ENCODE measurements at regions of chr11 and their contacts with region 1.

Region 1: GRCh38 chr11:28058333-28058732 is 49.6 kb downstream of the KIF18A start:
- DNase-seq: peak; percentile 11
- H3K4me3 ChIP-seq: no peak overlapping the region
- H3K27ac ChIP-seq: no peak overlapping the region
- H3K27me3 ChIP-seq: no peaks in the 10 kb centered on the region
- CTCF ChIP-seq: no peak

Region 2: DNA sequence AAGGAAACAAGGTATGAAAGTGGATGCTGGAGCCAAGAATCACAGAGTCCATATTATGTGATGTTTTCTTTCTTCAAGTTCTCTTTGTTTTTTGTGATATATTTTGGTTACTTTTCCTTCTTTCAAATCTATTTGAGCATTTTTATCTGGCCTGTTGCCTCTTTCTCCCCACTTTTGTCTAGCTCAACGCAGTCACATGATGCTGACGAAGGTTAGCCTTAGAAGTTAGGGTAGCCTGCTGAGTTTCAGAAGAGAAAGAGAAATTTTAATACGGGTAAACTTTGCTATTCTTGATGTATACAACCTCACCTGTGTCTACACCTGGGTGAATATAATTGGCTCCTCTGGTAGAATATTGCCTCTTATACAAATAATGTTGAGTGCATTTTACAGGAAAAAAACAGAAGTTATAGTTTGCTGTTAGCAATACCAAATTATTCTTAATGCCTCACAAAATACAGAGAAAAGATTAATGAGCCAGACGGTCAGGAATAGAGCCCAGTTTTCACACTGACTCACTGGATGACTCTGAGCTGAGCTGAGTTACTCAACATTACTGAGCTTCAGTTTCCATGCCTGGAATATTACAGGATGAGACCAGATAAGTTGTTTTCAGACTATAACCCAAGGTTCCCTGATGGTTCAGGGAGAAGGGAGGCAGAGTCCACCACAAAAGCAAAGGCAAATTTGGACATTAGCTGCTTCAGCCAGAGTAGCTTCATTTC is 196.5 kb before region 1 on chr11:
- CTCF ChIA-PET with region 1: interaction called, 15 read pairs
- POLR2A ChIA-PET with region 1: no interaction called
- DNase-seq: peak; percentile 71
- H3K4me3 ChIP-seq: no peak overlapping the region
- H3K27ac ChIP-seq: no peak overlapping the region
- H3K27me3 ChIP-seq: no peaks in the 10 kb centered on the region
- CTCF ChIP-seq: no peak

Region 3: GRCh38 chr11:28038775-28039174 is 19.6 kb before region 1 on chr11:
- CTCF ChIA-PET with region 1: no interaction called
- POLR2A ChIA-PET with region 1: no interaction called
- DNase-seq: no peak
- H3K4me3 ChIP-seq: no peak overlapping the region
- H3K27ac ChIP-seq: no peak overlapping the region
- H3K27me3 ChIP-seq: no peaks in the 10 kb centered on the region
- CTCF ChIP-seq: no peak

Region 4: DNA sequence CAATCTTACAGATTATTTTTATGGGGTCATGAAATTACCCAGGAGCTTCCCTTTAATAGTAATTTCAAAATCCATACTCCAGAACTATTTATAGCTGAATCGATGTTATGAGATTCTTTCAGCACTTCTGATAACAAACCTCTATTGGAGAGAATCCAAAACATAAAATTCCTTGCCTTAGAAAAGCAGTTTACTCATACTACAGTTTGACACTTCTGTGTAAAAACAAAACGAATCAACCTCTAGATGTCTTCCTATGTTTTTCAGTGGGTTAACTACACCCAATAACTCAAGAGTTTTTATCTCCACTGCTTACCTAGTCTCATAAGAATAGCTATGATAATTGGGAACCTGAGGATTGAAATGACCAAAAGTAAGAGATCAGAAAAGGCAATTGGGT is 14.0 kb after region 1 on chr11:
- CTCF ChIA-PET with region 1: no interaction called
- POLR2A ChIA-PET with region 1: no interaction called
- DNase-seq: no peak
- H3K4me3 ChIP-seq: no peak overlapping the region
- H3K27ac ChIP-seq: no peak overlapping the region
- H3K27me3 ChIP-seq: no peaks in the 10 kb centered on the region
- CTCF ChIP-seq: no peak

Region 5: DNA sequence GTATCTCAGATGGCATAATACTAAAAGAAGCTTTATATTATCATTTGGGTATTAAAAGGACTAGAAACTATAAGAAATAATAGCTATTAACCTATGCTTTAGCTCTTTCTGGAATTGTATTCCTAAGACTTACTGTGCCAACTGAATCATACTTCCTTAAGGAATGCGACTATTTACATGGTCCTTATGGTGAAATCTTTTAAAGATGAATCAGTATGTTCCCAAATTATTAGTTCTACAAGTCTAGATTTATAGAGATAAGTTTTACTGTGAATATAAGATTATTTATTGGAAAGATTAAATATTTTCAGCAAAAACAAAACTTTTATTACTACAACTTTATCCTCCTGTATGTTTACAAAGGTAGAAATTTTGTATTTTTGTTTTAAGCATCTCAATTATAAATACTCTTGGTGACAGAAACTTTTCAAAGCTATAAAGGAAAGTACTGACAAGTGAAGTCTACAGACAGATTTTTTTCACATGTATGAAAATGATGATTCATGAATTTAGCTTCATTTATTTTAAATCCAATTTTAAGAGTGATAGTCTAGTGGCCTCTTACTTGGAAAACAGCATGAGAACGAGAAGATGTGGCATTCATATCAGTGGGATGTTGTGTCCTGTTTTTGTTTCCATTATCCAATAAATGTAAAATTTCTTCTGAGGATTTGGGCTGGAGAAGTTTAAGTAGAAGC is 31.9 kb after region 1 on chr11:
- CTCF ChIA-PET with region 1: no interaction called
- POLR2A ChIA-PET with region 1: interaction called, 10 read pairs
- DNase-seq: peak; percentile 18
- H3K4me3 ChIP-seq: no peak overlapping the region
- H3K27ac ChIP-seq: no peak overlapping the region
- H3K27me3 ChIP-seq: no peaks in the 10 kb centered on the region
- CTCF ChIP-seq: no peak

Region 6: DNA sequence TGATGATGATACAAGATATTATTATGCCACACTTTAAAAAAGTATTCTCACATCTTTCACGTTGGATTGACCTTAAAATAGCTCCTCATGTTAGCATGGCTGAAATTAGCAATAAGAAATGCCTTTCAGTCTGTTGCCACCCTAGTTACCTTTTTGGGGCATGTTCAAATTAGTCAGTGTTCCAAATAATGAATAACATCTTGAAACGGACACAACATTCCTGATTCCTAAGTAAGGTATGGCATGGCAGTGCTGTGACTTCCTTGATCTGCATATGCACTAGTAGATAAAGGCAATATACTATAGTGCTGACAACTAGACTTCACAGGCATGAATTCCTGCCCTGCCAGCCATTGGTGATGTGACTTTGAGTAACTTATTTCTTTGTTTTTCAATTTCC is 964.3 kb after region 1 on chr11:
- CTCF ChIA-PET with region 1: no interaction called
- POLR2A ChIA-PET with region 1: interaction called, 12 read pairs
- DNase-seq: no peak
- H3K4me3 ChIP-seq: no peak overlapping the region
- H3K27ac ChIP-seq: no peak overlapping the region
- H3K27me3 ChIP-seq: no peaks in the 10 kb centered on the region
- CTCF ChIP-seq: no peak